Sciatic nerve (tissue), 2 donors: ENCODE measurements at regions of chr4 and their contacts with region 1.

Region 1: GRCh38 chr4:85050741-85051140 is 84.3 kb upstream of the WDFY3 start:
- DNase-seq: no peak
- ATAC-seq: no peak

Region 2: GRCh38 chr4:85125688-85126087 is 74.9 kb after region 1 on chr4:
- intact Hi-C with region 1: loop called (anchors 2 kb)
- DNase-seq: no peak
- ATAC-seq: no peak